Activated T-helper 1 cell treated with anti-CD3 and anti-CD28 coated beads, Interleukin-12 subunit alpha, Interleukin-12 subunit beta, Interleukin-2, Interleukin-4 antibody, amounts not matched to agents 30 ng/mL and 10 ng/mL and 1 ng/mL, durations not matched to agents 14 hours and 24 hours and 36 hours (primary cell): ENCODE measurements at regions of chr16 and their contacts with region 1.

Region 1: GRCh38 chr16:11224096-11224893 is 31.7 kb downstream of the SOCS1 start:
- DNase-seq: peak; percentile 66
- H3K4me3 Mint-ChIP-seq: peak overlapping the region; percentile 80
- H3K27ac Mint-ChIP-seq: peak overlapping the region; percentile 98
- H3K4me1 Mint-ChIP-seq: peaks cover 58% of the 10 kb centered on the region
- H3K27me3 Mint-ChIP-seq: no peaks in the 10 kb centered on the region

Region 2: DNA sequence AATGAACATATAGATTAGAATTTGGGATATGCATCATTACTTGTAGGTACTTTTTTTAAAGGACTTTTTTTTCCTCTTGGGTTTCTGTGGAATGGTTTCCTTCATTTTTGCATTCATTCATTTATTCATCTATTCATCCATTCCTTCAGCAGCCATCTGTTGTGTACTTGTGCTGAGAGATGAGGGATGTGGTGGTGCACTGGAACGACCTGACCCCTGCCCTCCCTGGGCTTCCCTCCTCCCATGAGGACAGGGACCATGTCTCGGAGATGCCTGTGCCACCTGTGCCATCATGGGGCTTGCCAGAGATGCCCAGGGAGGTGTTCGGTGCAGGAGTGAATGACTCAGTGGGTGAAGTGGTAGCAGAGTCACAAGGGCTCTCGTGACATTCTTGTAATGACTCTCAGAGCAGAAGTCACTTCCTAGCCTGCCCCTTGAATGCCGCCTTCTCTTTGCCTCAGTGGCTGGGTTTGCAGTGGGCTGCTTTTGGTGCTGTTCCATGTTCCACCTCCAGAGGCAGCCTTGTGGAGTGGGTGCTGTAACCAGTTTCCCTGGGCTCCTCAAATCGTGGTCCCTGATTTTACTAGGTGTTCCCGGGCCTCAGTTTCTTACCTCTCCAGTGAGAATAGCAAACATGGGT is 236.0 kb before region 1 on chr16:
- intact Hi-C with region 1: loop called (anchors 1 kb)
- DNase-seq: peak; percentile 64
- H3K4me3 Mint-ChIP-seq: peak overlapping the region; percentile 65
- H3K27ac Mint-ChIP-seq: peak overlapping the region; percentile 93
- H3K4me1 Mint-ChIP-seq: peaks cover 92% of the 10 kb centered on the region
- H3K27me3 Mint-ChIP-seq: no peaks in the 10 kb centered on the region

Region 3: GRCh38 chr16:11076259-11077018 is 147.9 kb before region 1 on chr16:
- intact Hi-C with region 1: loop called (anchors 1 kb)
- DNase-seq: peak; percentile 36
- H3K4me3 Mint-ChIP-seq: peak overlapping the region; percentile 48
- H3K27ac Mint-ChIP-seq: peak overlapping the region; percentile 90
- H3K4me1 Mint-ChIP-seq: peaks cover 94% of the 10 kb centered on the region
- H3K27me3 Mint-ChIP-seq: peaks cover 2% of the 10 kb centered on the region

Region 4: DNA sequence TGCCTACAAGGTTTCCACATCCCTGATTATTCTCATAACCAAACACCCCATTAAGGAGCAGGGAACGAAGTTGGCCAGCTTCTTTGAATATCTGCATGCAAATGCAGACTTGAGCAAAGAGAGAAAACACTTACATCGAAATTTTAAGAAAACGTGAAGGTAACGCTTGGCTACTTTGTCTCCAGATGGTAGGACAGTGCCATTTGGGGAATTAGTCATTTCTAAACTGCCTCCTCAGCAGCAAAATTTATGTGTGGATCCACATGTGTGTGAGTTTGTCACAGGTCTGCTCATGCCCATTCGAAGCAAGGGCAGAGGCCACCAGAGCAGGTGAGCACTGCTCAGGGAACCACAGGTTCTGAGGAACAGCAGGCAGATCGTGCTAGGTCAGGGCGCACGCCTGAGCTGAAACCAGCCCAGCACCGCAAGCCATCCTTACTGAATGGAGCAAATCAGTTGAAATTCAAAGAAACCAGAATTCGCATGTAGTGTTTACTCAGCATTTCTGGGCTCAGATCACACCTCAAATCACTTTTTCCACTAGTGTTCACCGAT is 48.4 kb before region 1 on chr16:
- intact Hi-C with region 1: loop called (anchors 1 kb)
- DNase-seq: no peak
- H3K4me3 Mint-ChIP-seq: peak overlapping the region; percentile 50
- H3K27ac Mint-ChIP-seq: peak overlapping the region; percentile 78
- H3K4me1 Mint-ChIP-seq: peaks cover 61% of the 10 kb centered on the region
- H3K27me3 Mint-ChIP-seq: peaks cover 2% of the 10 kb centered on the region

Region 5: DNA sequence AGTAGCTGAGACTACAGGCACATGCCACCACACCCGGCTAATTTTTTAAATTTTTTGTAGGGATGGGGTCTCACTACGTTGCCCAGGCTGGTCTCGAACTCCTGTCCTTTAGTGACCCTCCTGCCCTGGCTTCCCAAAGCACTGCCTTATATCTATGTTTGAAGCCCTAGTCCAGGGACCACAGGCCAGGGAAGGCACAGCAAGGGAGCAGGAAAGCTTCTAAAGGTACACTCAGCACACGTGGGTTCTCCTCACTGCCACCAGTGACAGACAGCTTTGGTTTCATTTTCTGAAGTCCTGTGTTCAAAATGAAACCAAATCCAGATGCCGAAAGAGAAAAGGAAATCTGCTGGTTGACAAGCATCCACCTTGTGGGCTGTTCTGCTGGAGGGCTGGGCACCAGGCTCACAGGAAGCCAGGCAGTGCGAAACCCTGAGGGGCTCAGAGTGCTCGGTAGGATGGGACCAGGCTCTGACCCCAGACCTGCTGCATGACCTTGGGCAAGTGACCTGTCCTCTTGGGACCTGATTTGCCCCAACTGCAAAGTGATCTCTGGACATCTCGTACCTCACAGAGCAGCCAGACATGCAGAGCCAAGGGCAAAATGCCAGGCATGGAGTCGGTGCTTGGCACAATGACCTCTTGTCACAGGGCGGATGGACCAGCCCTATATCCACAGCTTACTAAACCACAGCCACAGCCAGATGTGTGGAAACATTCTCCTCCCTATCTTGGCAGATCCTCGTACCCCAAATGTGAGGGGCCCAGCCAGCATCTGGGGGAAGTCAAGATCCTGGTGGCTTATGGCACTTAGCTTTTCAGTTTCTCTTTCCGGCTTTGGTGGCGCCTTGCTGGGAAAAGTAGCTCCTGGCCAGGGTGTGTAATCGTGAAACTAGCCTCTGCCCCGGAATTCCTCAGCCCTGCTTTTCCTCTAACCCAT is 34.5 kb after region 1 on chr16:
- intact Hi-C with region 1: no loop called
- DNase-seq: peak; percentile 59
- H3K4me3 Mint-ChIP-seq: peak overlapping the region; percentile 59
- H3K27ac Mint-ChIP-seq: peak overlapping the region; percentile 74
- H3K4me1 Mint-ChIP-seq: peaks cover 47% of the 10 kb centered on the region
- H3K27me3 Mint-ChIP-seq: peaks cover 11% of the 10 kb centered on the region

Region 6: GRCh38 chr16:11560701-11561449 is 336.6 kb after region 1 on chr16:
- intact Hi-C with region 1: loop called (anchors 1 kb)
- DNase-seq: peak; percentile 66
- H3K4me3 Mint-ChIP-seq: peak overlapping the region; percentile 81
- H3K27ac Mint-ChIP-seq: peak overlapping the region; percentile 95
- H3K4me1 Mint-ChIP-seq: peaks cover 79% of the 10 kb centered on the region
- H3K27me3 Mint-ChIP-seq: no peaks in the 10 kb centered on the region